ENCODE measurements at regions of chr16 and their contacts with region 1.

Region 1: GRCh38 chr16:69565671-69566239 is at the start of gene NFAT5:
- DNase-seq: peak; percentile 85
- H3K4me3 Mint-ChIP-seq: peak within 1 kb of the TSS; percentile 99
- H3K27ac Mint-ChIP-seq: peak within 1 kb of the TSS; percentile 98
- H3K4me1 Mint-ChIP-seq: no peaks in the 10 kb centered on the region
- H3K27me3 Mint-ChIP-seq: no peaks in the 10 kb centered on the region
- CTCF ChIP-seq: no peak
- total RNA-seq, gene NFAT5: 35.8 and 46.4 TPM in 2 replicates

Region 2: GRCh38 chr16:69396187-69397061 is 169.3 kb before region 1 on chr16:
- CTCF ChIA-PET with region 1: interaction called, 4 read pairs
- POLR2A ChIA-PET with region 1: interaction called, 23 read pairs
- intact Hi-C with region 1: loop called (anchors 1 kb)
- DNase-seq: peak; percentile 97
- H3K4me3 Mint-ChIP-seq: peak overlapping the region; percentile 35
- H3K27ac Mint-ChIP-seq: peak overlapping the region; percentile 78
- H3K4me1 Mint-ChIP-seq: peaks cover 17% of the 10 kb centered on the region
- H3K27me3 Mint-ChIP-seq: no peaks in the 10 kb centered on the region
- CTCF ChIP-seq: peak; percentile 59

Region 3: GRCh38 chr16:69424053-69424934 is 141.5 kb before region 1 on chr16 and contains the start of gene CYB5B:
- CTCF ChIA-PET with region 1: interaction called, 3 read pairs
- POLR2A ChIA-PET with region 1: interaction called, 25 read pairs
- intact Hi-C with region 1: no loop called
- DNase-seq: peak; percentile 99
- H3K4me3 Mint-ChIP-seq: peak within 1 kb of the TSS; percentile 87
- H3K27ac Mint-ChIP-seq: peak within 1 kb of the TSS; percentile 91
- H3K4me1 Mint-ChIP-seq: no peaks in the 10 kb centered on the region
- H3K27me3 Mint-ChIP-seq: no peaks in the 10 kb centered on the region
- CTCF ChIP-seq: no peak
- total RNA-seq, gene CYB5B: 112 and 118 TPM in 2 replicates

Region 4: DNA sequence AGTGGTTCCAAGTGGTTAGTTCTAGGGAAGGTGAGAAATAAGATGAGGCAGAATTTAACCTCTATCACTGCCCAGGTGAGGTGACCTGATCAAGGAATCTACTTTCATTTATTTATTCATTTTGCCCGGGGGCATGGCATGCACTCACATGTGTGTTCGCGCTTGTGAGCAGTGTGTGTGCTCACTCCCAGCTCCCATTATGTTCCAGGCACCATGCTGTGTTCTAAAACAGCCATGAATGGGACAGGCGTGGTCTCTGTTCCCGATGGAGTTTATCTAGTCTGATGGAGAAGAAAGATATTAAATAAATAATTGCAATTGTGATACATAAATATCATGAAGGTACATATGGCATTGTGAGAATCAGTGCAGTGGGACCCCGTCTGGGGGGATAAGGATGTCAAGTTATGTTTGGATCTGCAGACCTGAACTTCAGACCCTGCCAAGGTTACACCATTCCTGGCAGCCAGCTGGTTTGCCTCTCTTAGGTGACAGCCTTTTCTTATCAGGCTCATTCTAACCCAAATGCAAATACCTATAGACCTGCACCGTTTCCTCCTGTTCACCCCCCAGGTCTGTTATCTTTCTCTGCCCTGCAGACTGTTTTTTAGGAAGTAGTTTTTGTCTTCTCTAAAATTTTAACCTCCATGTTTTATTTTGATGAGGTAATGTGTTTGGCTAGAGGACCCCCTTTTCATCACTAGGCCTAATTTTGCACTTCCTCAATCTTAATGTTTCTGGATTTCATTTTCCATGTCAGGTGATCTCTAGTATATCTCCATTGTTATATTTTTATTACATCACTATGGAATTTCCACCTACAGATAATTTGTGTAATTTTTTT is 129.6 kb before region 1 on chr16:
- CTCF ChIA-PET with region 1: no interaction called
- POLR2A ChIA-PET with region 1: no interaction called
- intact Hi-C with region 1: no loop called
- DNase-seq: no peak
- H3K4me3 Mint-ChIP-seq: no peak overlapping the region
- H3K27ac Mint-ChIP-seq: no peak overlapping the region
- H3K4me1 Mint-ChIP-seq: peaks cover 8% of the 10 kb centered on the region
- H3K27me3 Mint-ChIP-seq: no peaks in the 10 kb centered on the region
- CTCF ChIP-seq: no peak

Region 5: GRCh38 chr16:69463876-69464275 is 101.9 kb before region 1 on chr16:
- CTCF ChIA-PET with region 1: no interaction called
- POLR2A ChIA-PET with region 1: no interaction called
- intact Hi-C with region 1: no loop called
- DNase-seq: no peak
- H3K4me3 Mint-ChIP-seq: no peak overlapping the region
- H3K27ac Mint-ChIP-seq: no peak overlapping the region
- H3K4me1 Mint-ChIP-seq: no peaks in the 10 kb centered on the region
- H3K27me3 Mint-ChIP-seq: no peaks in the 10 kb centered on the region
- CTCF ChIP-seq: no peak

Region 6: DNA sequence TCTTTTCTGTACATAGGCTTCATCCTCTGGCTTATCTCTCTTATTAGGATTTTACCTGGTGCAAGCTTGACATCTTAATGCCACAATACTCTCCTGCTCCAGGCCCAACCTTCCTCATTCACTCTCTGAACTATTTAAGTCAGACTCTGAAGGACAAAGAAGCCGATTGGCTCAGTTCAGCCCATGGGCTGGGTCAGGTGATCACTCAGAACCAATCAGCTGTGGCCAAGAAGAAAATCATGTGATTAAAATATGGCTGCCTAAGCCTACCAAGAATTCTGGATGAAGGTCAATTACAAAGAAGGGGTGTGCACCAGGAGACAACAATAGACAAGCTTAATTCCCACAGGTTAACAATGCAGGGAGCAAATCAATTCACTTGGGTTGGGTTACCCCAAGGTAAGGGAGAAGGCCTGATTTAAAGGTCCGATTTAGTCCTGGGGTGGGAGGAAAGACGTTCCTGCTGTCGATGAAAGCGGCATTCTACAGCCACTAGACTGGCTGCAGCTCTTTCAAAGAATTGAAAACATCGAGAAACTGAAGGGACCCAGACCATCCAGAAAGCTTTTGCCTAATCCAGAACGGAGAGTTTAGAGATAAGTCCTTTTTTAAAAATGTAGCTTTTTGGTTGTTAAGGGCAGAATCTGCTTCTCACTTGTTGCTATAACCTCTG is 42.9 kb before region 1 on chr16:
- CTCF ChIA-PET with region 1: interaction called, 3 read pairs
- POLR2A ChIA-PET with region 1: interaction called, 22 read pairs
- intact Hi-C with region 1: no loop called
- DNase-seq: no peak
- H3K4me3 Mint-ChIP-seq: no peak overlapping the region
- H3K27ac Mint-ChIP-seq: no peak overlapping the region
- H3K4me1 Mint-ChIP-seq: peaks cover 11% of the 10 kb centered on the region
- H3K27me3 Mint-ChIP-seq: no peaks in the 10 kb centered on the region
- CTCF ChIP-seq: no peak

Region 7: DNA sequence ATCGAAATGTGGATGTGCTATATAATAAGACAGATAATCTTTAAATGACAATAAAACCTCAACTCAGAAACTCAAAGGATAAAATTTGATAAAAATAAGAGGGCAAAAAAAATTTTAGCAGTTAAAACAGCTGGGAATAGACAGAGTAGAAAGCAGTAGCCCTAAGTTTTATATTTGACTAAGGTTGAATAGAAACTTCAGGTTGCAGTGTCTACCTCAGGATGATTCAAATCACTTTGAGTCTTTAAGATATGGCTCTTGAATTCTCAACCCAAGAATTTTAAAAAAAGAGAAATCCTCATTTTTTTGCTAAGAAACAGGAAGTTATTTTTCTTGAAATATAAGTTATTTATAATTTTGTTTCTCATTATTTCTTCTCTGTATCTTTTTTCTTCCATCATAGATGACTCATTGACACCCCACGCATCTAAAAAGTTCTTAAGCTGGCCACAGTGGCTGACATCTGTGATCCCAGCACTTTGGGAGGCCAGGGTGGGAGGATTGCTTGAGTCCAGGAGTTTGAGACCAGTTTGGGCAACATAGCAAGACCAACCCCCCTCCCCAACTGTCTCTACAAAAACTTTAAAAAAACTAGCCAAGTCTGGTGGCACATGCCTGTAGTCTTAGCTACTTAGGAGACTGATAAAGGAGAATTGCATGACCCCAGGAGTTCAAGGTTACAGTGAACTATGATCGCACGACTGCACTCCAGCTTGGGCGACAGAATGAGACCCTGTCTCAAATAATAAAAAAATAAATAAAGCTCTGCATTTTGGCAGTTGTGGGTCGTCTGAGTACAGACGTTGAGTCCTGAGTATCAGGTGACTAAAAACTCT is 23.9 kb after region 1 on chr16:
- CTCF ChIA-PET with region 1: no interaction called
- POLR2A ChIA-PET with region 1: interaction called, 15 read pairs
- intact Hi-C with region 1: no loop called
- DNase-seq: no peak
- H3K4me3 Mint-ChIP-seq: no peak overlapping the region
- H3K27ac Mint-ChIP-seq: peak overlapping the region; percentile 42
- H3K4me1 Mint-ChIP-seq: peaks cover 6% of the 10 kb centered on the region
- H3K27me3 Mint-ChIP-seq: no peaks in the 10 kb centered on the region
- CTCF ChIP-seq: no peak

Measured in MCF 10A (cell line).